GM12878 (cell line): ENCODE measurements at regions of chr6 and their contacts with region 1.

Region 1: DNA sequence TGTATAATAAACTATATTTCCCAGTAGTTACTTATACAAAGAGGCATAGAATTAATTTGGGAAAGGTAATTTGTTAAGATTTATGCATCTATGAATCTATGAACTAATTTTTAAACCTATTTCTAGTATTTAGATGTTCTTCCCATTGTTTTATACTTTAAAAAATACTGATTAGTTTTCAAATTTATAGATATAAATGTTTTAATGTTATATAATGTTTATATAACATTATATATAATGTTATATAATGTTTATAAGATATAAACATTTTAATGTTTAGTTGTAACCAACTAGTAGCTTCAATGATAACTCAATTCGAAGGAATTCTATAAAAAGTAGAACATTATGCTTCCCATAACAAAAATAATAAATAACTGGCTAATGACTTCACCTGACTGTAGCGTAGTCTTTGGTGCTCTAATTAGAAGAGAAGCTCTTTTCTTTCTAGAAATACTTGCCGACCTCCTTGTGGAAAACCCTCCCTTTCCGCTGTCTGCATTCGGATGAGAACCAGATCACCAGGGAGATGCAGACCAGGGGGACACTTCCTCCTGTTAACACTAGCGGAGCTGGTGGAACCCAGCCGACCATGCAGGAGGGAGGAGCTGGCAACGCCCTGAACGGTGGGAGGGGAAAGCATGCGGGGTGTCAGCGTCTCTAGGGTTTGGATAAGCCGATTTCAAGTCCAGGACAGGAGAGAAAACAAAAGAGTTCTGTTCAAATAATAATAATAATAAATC is 158.4 kb downstream of the OR2B2 start:
- DNase-seq: peak; percentile 72
- ATAC-seq: peak; percentile 84
- H3K4me3 ChIP-seq: peak overlapping the region; percentile 58
- H3K27ac ChIP-seq: peak overlapping the region; percentile 48
- H3K4me1 ChIP-seq: peaks cover 9% of the 10 kb centered on the region; the same call in 1 of the 2 replicates
- H3K27me3 ChIP-seq: no peaks in the 10 kb centered on the region
- CTCF ChIP-seq: peak in 2 of 3 experiments; percentile 5 to 15; a peak in 2 of 6 replicates
- EP300 ChIP-seq: no peak
- POLR2A ChIP-seq: peak; percentile 52; the same call in 1 of the 2 replicates
- RAD21 ChIP-seq: no peak

Region 2: GRCh38 chr6:26312501-26313390 is 1441.1 kb before region 1 on chr6:
- CTCF ChIA-PET with region 1: no interaction called
- POLR2A ChIA-PET with region 1: no interaction called
- RAD21 ChIA-PET with region 1: no interaction called
- SMC1A ChIA-PET with region 1: no interaction called
- in situ Hi-C with region 1: no loop called
- intact Hi-C with region 1: loop called (anchors 5 kb)
- DNase-seq: no peak
- ATAC-seq: peak; percentile 72
- H3K4me3 ChIP-seq: peak overlapping the region; percentile 80
- H3K27ac ChIP-seq: peak overlapping the region; percentile 66
- H3K4me1 ChIP-seq: peaks cover 14% of the 10 kb centered on the region
- H3K27me3 ChIP-seq: no peaks in the 10 kb centered on the region
- CTCF ChIP-seq: no peak
- EP300 ChIP-seq: peak in 1 of 2 experiments; percentile 61; a peak in 1 of 4 replicates
- POLR2A ChIP-seq: no peak
- RAD21 ChIP-seq: no peak

Region 3: GRCh38 chr6:27188885-27189418 is 564.9 kb before region 1 on chr6:
- CTCF ChIA-PET with region 1: interaction called, 6 read pairs
- POLR2A ChIA-PET with region 1: interaction called, 4 read pairs
- RAD21 ChIA-PET with region 1: no interaction called
- SMC1A ChIA-PET with region 1: interaction called, 5 read pairs
- in situ Hi-C with region 1: no loop called
- intact Hi-C with region 1: loop called (anchors 1 kb)
- DNase-seq: peak; percentile 50
- ATAC-seq: peak; percentile 91
- H3K4me3 ChIP-seq: peak overlapping the region; percentile 75
- H3K27ac ChIP-seq: peak overlapping the region; percentile 78
- H3K4me1 ChIP-seq: no peaks in the 10 kb centered on the region
- H3K27me3 ChIP-seq: no peaks in the 10 kb centered on the region
- CTCF ChIP-seq: peak; percentile 49 to 71 (median 59); a peak in 5 of 6 replicates
- EP300 ChIP-seq: no peak
- POLR2A ChIP-seq: no peak
- RAD21 ChIP-seq: peak; percentile 90

Region 4: GRCh38 chr6:27503436-27504030 is 250.3 kb before region 1 on chr6:
- CTCF ChIA-PET with region 1: interaction called, 6 read pairs
- POLR2A ChIA-PET with region 1: no interaction called
- RAD21 ChIA-PET with region 1: interaction called, 7 read pairs
- SMC1A ChIA-PET with region 1: interaction called, 3 read pairs
- in situ Hi-C with region 1: loop called (anchors 25 kb)
- intact Hi-C with region 1: loop called (anchors 5 kb)
- DNase-seq: peak; percentile 73
- ATAC-seq: peak; percentile 70
- H3K4me3 ChIP-seq: peak overlapping the region; percentile 78
- H3K27ac ChIP-seq: peak overlapping the region; percentile 58
- H3K4me1 ChIP-seq: no peaks in the 10 kb centered on the region
- H3K27me3 ChIP-seq: no peaks in the 10 kb centered on the region; a peak in 1 of 4 replicates
- CTCF ChIP-seq: no peak
- EP300 ChIP-seq: no peak
- POLR2A ChIP-seq: no peak
- RAD21 ChIP-seq: no peak

Region 5: DNA sequence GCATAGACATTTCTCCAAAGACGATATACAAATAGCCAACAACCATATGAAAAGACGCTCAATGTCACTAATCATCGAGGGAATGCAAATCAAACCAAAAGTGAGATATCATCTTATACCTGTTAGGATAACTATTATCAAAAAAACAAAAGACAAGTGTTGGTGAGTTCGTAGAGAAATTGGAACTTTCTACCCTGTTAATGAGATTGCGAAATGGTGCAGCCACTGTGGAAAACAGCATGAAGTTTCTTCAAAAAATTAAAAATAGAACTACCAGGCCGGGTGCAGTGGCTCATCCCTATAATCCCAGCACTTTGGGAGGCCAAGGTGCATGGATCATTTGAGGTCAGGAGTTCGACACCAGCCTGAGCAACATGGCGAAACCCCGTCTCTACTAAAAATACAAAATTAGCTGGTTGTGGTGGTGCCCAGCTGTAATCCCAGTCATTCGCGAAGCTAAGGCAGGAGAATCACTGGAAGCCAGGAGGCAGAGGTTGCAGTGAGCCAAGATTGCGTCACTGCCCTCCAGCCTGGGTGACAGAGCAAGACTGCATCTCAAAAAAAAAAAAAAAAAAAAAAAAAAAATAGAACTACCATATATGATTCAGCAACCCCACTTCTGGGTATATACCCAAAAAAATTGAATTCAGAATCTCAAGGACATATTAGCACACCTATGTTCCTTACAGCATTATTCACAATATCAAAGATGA is 110.9 kb before region 1 on chr6:
- CTCF ChIA-PET with region 1: no interaction called
- POLR2A ChIA-PET with region 1: no interaction called
- RAD21 ChIA-PET with region 1: no interaction called
- SMC1A ChIA-PET with region 1: no interaction called
- in situ Hi-C with region 1: no loop called
- intact Hi-C with region 1: no loop called
- DNase-seq: no peak
- ATAC-seq: no peak
- H3K4me3 ChIP-seq: no peak overlapping the region
- H3K27ac ChIP-seq: no peak overlapping the region
- H3K4me1 ChIP-seq: no peaks in the 10 kb centered on the region
- H3K27me3 ChIP-seq: no peaks in the 10 kb centered on the region
- CTCF ChIP-seq: no peak
- EP300 ChIP-seq: no peak
- POLR2A ChIP-seq: no peak
- RAD21 ChIP-seq: no peak

Region 6: DNA sequence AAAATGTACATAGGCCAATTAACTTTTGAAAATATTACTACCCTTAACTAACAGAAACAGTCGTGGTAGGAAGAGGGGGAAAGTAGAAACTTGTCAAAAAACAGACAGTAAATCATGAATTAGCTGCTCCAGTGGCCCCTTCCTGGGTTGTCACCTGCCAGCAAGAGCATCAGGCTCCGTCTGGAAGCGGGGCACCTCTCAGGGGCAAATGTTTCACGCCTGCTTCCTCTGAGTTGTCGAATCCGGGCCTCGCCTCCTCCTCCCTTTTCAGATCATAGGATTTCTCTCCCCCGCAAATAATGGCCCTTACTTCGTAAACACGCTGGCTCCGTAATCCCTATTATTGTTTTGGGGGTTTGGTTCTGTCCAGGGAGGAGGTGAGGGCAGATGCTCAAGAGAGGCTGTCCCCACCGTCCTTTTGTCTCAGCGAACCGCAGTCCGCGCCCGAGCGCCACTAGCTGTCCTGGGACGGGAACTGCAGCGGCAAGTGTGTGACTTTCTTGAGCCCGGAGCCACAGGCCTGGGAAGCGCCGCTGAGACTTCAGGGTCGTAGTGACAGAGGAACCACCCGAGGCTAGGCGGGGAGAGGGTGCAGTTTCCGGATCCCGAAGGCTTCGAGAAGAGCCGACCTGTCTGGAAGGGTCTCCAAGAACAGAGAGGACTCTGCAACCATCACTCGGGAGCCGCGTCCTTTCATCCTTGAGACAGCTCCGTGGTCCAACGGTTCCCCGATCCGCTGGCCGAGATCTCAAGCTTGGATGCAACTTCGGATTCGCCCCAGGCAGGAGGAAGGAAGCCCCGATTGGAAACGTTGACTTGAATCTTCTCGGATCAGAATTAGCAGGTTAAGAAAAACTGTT is 66.5 kb before region 1 on chr6:
- CTCF ChIA-PET with region 1: interaction called, 25 read pairs
- POLR2A ChIA-PET with region 1: interaction called, 4 read pairs
- RAD21 ChIA-PET with region 1: interaction called, 12 read pairs
- SMC1A ChIA-PET with region 1: interaction called, 15 read pairs
- in situ Hi-C with region 1: no loop called
- intact Hi-C with region 1: loop called (anchors 1 kb)
- DNase-seq: peak; percentile 67
- ATAC-seq: peak; percentile 90
- H3K4me3 ChIP-seq: peak overlapping the region; percentile 76
- H3K27ac ChIP-seq: peak overlapping the region; percentile 76
- H3K4me1 ChIP-seq: no peaks in the 10 kb centered on the region
- H3K27me3 ChIP-seq: no peaks in the 10 kb centered on the region
- CTCF ChIP-seq: peak; percentile 91 to 96 (median 93)
- EP300 ChIP-seq: no peak
- POLR2A ChIP-seq: peak; percentile 48; the same call in 1 of the 2 replicates
- RAD21 ChIP-seq: peak; percentile 80

Region 7: DNA sequence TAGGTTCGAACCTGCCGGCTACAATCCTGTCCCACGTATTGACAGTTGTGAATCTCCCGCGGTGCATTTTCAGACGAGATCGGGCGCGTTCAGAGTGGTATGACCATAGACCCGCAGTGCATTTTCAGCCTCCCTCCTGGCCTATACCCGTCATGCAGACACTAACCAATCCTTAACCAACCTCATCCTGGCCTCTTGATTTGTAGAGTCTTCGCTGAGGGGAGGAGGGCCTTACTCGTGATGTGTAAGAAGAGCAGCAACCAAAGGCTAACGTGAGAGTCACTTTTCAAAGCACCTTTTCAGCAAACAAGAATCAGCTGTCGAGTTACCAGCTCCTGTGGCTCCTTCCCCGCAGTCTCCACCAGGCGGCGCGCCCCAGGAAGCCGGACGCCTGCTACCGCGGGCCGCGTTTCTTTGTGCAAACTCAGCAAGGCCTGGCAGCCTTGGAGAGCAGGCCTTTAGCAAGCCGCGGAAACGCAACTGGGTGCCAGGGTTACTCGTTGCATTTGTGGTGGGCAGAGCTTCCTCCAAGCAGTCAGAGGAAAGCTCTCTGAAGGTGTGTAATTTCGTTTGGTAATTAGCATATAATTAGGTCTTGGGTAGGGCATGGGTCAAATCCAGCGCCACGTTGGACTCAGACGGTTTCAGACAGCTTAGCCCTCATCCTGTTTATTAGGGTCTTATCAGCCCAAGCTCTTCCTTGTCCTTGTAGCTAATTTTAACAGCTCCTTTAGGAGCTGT is 18.6 kb after region 1 on chr6:
- CTCF ChIA-PET with region 1: interaction called, 193 read pairs
- POLR2A ChIA-PET with region 1: interaction called, 29 read pairs
- RAD21 ChIA-PET with region 1: interaction called, 43 read pairs
- SMC1A ChIA-PET with region 1: interaction called, 93 read pairs
- in situ Hi-C with region 1: no loop called
- intact Hi-C with region 1: no loop called
- DNase-seq: no peak
- ATAC-seq: peak; percentile 86
- H3K4me3 ChIP-seq: no peak overlapping the region
- H3K27ac ChIP-seq: no peak overlapping the region
- H3K4me1 ChIP-seq: peaks cover 18% of the 10 kb centered on the region
- H3K27me3 ChIP-seq: no peaks in the 10 kb centered on the region
- CTCF ChIP-seq: peak; percentile 86 to 95 (median 94)
- EP300 ChIP-seq: no peak
- POLR2A ChIP-seq: no peak
- RAD21 ChIP-seq: peak; percentile 69

Region 8: GRCh38 chr6:27902335-27903314 is 148.8 kb after region 1 on chr6:
- CTCF ChIA-PET with region 1: interaction called, 5 read pairs
- POLR2A ChIA-PET with region 1: no interaction called
- RAD21 ChIA-PET with region 1: interaction called, 6 read pairs
- SMC1A ChIA-PET with region 1: no interaction called
- in situ Hi-C with region 1: no loop called
- intact Hi-C with region 1: loop called (anchors 2 kb)
- DNase-seq: peak; percentile 84
- ATAC-seq: peak; percentile 82
- H3K4me3 ChIP-seq: peak overlapping the region; percentile 82
- H3K27ac ChIP-seq: peak overlapping the region; percentile 77
- H3K4me1 ChIP-seq: peaks cover 13% of the 10 kb centered on the region; the same call in 1 of the 2 replicates
- H3K27me3 ChIP-seq: no peaks in the 10 kb centered on the region
- CTCF ChIP-seq: no peak
- EP300 ChIP-seq: peak in 1 of 2 experiments; percentile 73; a peak in 2 of 4 replicates
- POLR2A ChIP-seq: no peak
- RAD21 ChIP-seq: no peak